Activated naive CD4-positive, alpha-beta T cell treated with anti-CD3 and anti-CD28 coated beads, Interleukin-2, amount 10 ng/mL, durations not matched to agents 7 days and 5 days (primary cell): ENCODE measurements at regions of chr10 and their contacts with region 1.

Region 1: GRCh38 chr10:95374597-95375209 is 83.9 kb upstream of the PDLIM1 start:
- DNase-seq: peak; percentile 82
- H3K4me3 Mint-ChIP-seq: no peak overlapping the region
- H3K27ac Mint-ChIP-seq: no peak overlapping the region
- H3K4me1 Mint-ChIP-seq: peaks cover 5% of the 10 kb centered on the region
- H3K27me3 Mint-ChIP-seq: peaks cover 24% of the 10 kb centered on the region

Region 2: GRCh38 chr10:95133016-95133752 is 241.5 kb before region 1 on chr10:
- CTCF ChIA-PET with region 1: interaction called, 10 read pairs
- DNase-seq: peak; percentile 86
- H3K4me3 Mint-ChIP-seq: no peak overlapping the region
- H3K27ac Mint-ChIP-seq: no peak overlapping the region
- H3K4me1 Mint-ChIP-seq: no peaks in the 10 kb centered on the region
- H3K27me3 Mint-ChIP-seq: no peaks in the 10 kb centered on the region

Region 3: DNA sequence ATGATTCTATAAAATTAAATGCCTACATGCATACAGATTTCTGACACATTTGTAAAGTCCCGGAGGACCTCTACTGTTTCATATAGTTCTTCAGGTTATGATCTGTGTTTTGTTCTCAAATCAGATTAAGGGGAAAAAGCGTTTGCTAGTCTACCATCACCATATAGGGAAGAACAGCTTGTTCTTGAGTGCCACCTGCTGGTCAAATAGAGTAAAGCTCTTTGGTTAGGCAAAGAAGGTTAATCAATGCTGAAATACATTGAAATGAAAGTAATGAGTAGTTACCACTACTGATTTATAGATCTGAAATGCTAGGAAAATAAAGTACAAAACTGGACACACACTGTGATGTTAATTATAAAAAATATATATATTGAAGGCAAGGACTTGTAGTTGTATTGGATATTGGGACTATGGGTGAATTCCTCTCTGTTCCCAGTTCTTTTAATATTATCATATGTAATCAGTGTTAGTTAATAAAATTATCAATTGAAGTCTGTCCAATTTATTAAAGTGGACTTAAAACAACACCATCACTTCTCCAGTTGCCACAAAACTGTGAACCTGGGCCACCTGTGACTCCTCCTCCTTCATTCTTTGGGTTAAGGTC is 11.3 kb before region 1 on chr10:
- CTCF ChIA-PET with region 1: interaction called, 59 read pairs
- DNase-seq: peak; percentile 68
- H3K4me3 Mint-ChIP-seq: no peak overlapping the region
- H3K27ac Mint-ChIP-seq: no peak overlapping the region
- H3K4me1 Mint-ChIP-seq: no peaks in the 10 kb centered on the region
- H3K27me3 Mint-ChIP-seq: peaks cover 20% of the 10 kb centered on the region

Region 4: DNA sequence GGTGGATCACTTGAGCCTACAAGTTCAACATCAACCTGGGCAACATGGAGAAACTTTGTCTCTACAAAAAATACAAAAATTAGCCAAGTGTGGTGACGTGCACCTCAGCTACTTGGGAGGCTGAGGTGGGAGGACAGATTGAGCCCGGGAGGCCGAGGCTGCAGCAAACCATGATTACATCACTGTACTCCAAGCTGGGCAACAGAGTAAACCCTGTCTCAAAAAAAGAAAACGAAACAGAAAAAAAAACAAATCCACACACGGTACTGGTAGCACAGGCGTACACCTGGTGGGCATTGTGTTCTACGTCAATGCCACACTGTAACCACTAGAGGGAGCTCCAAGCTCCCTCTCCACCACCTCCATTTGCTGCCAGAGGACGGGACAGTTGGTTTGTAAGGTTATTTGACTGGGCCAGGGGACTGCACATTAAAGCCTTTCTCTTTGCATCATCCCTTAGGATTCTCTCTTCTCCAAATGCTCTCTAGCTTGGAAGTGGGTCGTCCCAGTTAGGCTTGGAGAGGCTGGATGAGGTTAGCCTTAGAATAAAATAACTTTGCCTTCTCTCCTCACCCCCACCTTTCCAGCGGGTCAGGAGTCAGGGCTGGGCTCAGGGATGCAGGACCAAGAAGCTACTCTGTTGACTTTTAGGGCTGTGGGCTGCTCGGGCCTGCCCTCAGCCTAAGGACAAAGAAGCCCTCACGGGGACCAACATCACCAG is 55.7 kb after region 1 on chr10:
- CTCF ChIA-PET with region 1: interaction called, 26 read pairs
- DNase-seq: peak; percentile 54
- H3K4me3 Mint-ChIP-seq: no peak overlapping the region
- H3K27ac Mint-ChIP-seq: no peak overlapping the region
- H3K4me1 Mint-ChIP-seq: no peaks in the 10 kb centered on the region
- H3K27me3 Mint-ChIP-seq: peaks cover 15% of the 10 kb centered on the region

Region 5: GRCh38 chr10:95601116-95601719 is 226.5 kb after region 1 on chr10:
- CTCF ChIA-PET with region 1: interaction called, 68 read pairs
- DNase-seq: peak; percentile 65
- H3K4me3 Mint-ChIP-seq: no peak overlapping the region
- H3K27ac Mint-ChIP-seq: no peak overlapping the region
- H3K4me1 Mint-ChIP-seq: no peaks in the 10 kb centered on the region
- H3K27me3 Mint-ChIP-seq: peaks cover 7% of the 10 kb centered on the region

Region 6: GRCh38 chr10:95618126-95618525 is 243.4 kb after region 1 on chr10:
- CTCF ChIA-PET with region 1: no interaction called
- DNase-seq: no peak
- H3K4me3 Mint-ChIP-seq: no peak overlapping the region
- H3K27ac Mint-ChIP-seq: no peak overlapping the region
- H3K4me1 Mint-ChIP-seq: no peaks in the 10 kb centered on the region
- H3K27me3 Mint-ChIP-seq: no peaks in the 10 kb centered on the region